Activated naive CD8-positive, alpha-beta T cell treated with anti-CD3 and anti-CD28 coated beads, Interleukin-2, amount 10 ng/mL, durations not matched to agents 7 days and 5 days (primary cell): ENCODE measurements at regions of chr12 and their contacts with region 1.

Region 1: DNA sequence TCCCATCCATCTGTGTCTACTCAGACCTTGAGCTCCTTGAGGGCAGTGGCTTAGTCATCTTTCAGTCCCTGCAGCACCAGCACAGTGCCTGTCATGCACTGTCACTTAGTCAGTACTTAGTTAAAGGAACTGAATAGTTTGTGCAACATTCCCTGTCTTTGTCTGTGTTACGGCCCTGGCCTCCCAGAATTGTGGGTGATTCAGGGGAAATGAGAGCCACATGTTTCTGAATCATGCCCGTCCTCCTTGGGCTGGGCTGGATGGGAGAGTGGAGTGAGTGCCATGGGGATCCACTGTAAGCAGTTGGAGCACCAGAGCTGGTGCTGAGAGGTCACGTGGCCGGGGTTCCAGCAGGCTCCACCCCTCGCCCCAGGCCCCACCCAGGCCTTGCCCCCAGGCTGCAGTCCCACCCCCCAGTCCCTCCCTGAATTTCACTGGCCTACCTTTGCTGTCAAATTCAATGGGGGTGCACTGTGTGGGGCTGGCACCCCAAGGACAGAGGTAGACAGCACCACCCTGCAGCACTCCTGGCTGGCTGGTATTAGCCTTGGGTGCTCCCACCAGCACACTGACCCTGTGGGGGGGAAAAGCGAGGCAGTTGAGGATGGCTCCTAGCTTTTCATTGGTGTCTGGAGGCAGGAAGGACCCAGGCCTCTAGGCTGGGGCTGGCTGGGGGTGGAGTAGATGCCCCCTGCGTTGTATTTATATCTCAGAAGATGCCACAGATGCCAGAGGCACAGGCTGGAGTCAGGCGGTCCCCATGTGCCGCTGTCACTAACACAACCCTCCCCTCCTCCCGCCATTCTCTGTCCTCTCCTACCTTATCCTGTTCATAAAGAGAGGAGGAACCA is 7.5 kb downstream of the ITGA5 start:
- DNase-seq: peak; percentile 60
- ATAC-seq: peak; percentile 20
- H3K4me3 Mint-ChIP-seq: peak overlapping the region; percentile 73
- H3K27ac Mint-ChIP-seq: peak overlapping the region; percentile 95
- H3K4me1 Mint-ChIP-seq: peaks cover 45% of the 10 kb centered on the region
- H3K27me3 Mint-ChIP-seq: no peaks in the 10 kb centered on the region

Region 2: DNA sequence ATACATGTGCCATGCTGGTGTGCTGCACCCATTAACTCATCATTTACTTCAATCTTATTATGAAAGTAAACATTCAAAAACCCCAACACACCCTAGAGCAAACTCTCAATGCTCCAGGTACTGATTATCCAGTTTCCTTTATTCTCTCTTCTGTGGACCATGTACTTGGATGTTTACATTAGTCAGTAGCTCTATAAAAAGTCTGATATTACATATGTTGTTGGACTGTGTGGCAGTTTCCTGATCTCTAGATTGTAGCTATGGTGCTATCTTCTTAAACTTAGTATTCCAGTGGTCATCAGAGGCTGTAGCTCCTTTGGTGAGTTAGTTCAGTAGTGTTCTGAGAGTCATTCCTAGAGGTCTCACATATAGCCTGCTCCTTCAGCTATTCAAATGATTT is 32.6 kb after region 1 on chr12:
- POLR2A ChIA-PET with region 1: no interaction called
- DNase-seq: no peak
- ATAC-seq: no peak
- H3K4me3 Mint-ChIP-seq: no peak overlapping the region
- H3K27ac Mint-ChIP-seq: no peak overlapping the region
- H3K4me1 Mint-ChIP-seq: peaks cover 5% of the 10 kb centered on the region
- H3K27me3 Mint-ChIP-seq: peaks cover 21% of the 10 kb centered on the region

Region 3: DNA sequence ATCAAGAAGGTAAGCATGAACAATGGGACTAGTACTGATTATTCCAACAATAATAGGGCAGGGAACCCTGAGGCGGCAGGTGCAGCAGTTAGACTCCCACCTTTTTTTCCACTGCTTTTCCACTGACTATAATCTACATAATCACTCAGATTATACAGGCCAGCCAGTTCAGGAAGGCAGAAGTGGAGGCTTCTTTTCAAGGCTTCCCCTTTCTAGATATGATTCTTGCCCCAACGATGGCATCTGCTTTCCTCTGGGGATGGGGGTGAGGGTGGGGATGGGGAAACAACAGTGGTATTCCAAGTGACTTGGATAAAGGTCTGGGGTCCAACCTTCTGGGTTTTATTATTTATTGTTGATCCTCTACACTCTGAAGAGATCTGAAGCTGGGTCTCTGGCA is 86.3 kb after region 1 on chr12:
- POLR2A ChIA-PET with region 1: interaction called, 12 read pairs
- DNase-seq: no peak
- ATAC-seq: peak; percentile 3
- H3K4me3 Mint-ChIP-seq: peak overlapping the region; percentile 93
- H3K27ac Mint-ChIP-seq: peak overlapping the region; percentile 95
- H3K4me1 Mint-ChIP-seq: peaks cover 34% of the 10 kb centered on the region
- H3K27me3 Mint-ChIP-seq: no peaks in the 10 kb centered on the region